Stomach (tissue), 19 donors: ENCODE measurements at regions of chr10 and their contacts with region 1.

Region 1: GRCh38 chr10:113126229-113127201 is 176.5 kb downstream of the TCF7L2 start:
- DNase-seq: peak; percentile 75 to 92
- H3K4me3 ChIP-seq: peak overlapping the region; percentile 35 to 39 (median 37)
- H3K27ac ChIP-seq: peak overlapping the region in 4 of 5 donors; percentile 10 to 60 (median 44)
- H3K4me1 ChIP-seq: peaks cover 0 to 67% (median 28%) of the 10 kb centered on the region in 4 donors
- H3K27me3 ChIP-seq: no peaks in the 10 kb centered on the region
- CTCF ChIP-seq: peak in 5 of 7 experiments; percentile 7 to 86 (median 72)
- EP300 ChIP-seq: no peak
- POLR2A ChIP-seq: no peak

Region 2: GRCh38 chr10:112721080-112721698 is 405.3 kb before region 1 on chr10:
- intact Hi-C with region 1: loop called (anchors 10 kb)
- DNase-seq: peak in 1 of 2 donors; percentile 70
- H3K4me3 ChIP-seq: no peak overlapping the region
- H3K27ac ChIP-seq: no peak overlapping the region
- H3K4me1 ChIP-seq: peaks cover 0 to 6% (median 2%) of the 10 kb centered on the region in 4 donors
- H3K27me3 ChIP-seq: no peaks in the 10 kb centered on the region
- CTCF ChIP-seq: peak in 4 of 7 experiments; percentile 47 to 61 (median 50)
- EP300 ChIP-seq: no peak
- POLR2A ChIP-seq: no peak

Region 3: GRCh38 chr10:112949875-112950507 is 176.5 kb before region 1 on chr10 and contains the start of gene TCF7L2:
- intact Hi-C with region 1: no loop called
- DNase-seq: peak; percentile 96 to 99
- H3K4me3 ChIP-seq: peak within 1 kb of the TSS; percentile 64 to 81 (median 70)
- H3K27ac ChIP-seq: peak within 1 kb of the TSS; percentile 94 to 97 (median 95)
- H3K4me1 ChIP-seq: peaks cover 9 to 70% (median 32%) of the 10 kb centered on the region in 4 donors
- H3K27me3 ChIP-seq: no peaks in the 10 kb centered on the region
- CTCF ChIP-seq: no peak
- EP300 ChIP-seq: no peak
- POLR2A ChIP-seq: peak in 1 of 4 donors; percentile 53
- total RNA-seq, gene TCF7L2: 34.1 to 179 (median 89.9) TPM

Region 4: DNA sequence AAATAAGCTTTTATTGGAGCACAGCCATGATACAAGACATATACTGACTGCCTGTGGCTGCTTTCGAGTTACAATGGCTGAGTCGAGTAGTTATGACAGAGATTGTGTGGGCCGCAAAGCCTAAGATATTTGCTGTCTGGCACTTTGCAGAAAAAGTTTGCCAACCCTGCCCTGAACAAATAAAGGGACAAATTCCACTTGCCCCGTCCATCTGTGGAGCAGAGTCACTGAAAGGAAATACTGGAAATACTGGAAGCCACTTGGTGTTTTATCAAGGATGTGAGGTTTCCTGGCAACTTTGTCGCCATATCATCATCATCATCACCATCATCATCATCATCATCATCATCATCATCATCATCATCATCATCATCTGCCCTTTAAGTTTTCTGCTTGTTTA is 90.7 kb before region 1 on chr10:
- intact Hi-C with region 1: no loop called
- DNase-seq: peak; percentile 63 to 78
- H3K4me3 ChIP-seq: no peak overlapping the region
- H3K27ac ChIP-seq: peak overlapping the region in 4 of 5 donors; percentile 38 to 64 (median 54)
- H3K4me1 ChIP-seq: peaks cover 0 to 51% (median 33%) of the 10 kb centered on the region in 4 donors
- H3K27me3 ChIP-seq: no peaks in the 10 kb centered on the region
- CTCF ChIP-seq: no peak
- EP300 ChIP-seq: no peak
- POLR2A ChIP-seq: no peak

Region 5: DNA sequence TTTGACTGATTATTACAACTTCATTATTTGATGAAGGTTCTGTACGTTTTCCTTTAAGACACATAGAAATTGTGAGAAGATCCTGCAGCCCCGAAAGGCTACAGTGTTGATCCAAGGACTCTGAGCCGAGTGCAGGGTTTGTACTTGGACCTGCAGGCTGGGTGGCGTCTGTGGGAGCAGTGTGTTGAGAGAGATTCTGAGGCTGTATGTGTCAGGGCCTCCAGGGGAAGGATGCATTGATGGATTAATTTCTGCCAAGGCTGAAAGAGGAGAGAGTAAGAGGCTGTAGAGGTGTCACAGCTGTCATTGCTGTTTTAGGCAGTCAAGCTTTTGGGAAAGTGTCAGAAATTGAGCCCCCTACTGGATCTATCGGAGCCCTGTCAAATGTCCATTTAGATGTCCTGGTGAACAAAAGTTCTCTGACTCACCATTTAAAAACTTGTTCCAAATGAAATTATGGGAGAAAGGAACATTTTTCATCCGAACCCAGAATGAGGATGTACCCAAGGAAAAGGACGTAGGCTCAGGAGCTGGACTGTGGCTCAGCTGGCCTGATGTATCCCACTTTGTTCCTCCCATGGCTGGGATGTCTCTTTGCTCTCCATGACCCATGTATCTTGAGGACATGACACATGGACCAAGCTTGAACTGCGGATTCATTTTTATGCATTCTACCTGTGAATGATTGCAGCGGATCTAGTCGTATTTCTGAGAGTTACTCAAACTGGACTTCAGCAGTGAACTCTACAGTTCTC is 74.3 kb before region 1 on chr10:
- intact Hi-C with region 1: no loop called
- DNase-seq: no peak
- H3K4me3 ChIP-seq: no peak overlapping the region
- H3K27ac ChIP-seq: peak overlapping the region in 4 of 5 donors; percentile 16 to 62 (median 48)
- H3K4me1 ChIP-seq: peaks cover 20 to 96% (median 55%) of the 10 kb centered on the region in 4 donors
- H3K27me3 ChIP-seq: no peaks in the 10 kb centered on the region
- CTCF ChIP-seq: peak in 1 of 7 experiments; percentile 10
- EP300 ChIP-seq: no peak
- POLR2A ChIP-seq: no peak